ENCODE measurements at regions of chr11 and their contacts with region 1.

Region 1: GRCh38 chr11:61718621-61719302 is 33.7 kb upstream of the MYRF start:
- DNase-seq: no peak
- H3K4me3 ChIP-seq: no peak overlapping the region
- H3K27ac ChIP-seq: no peak overlapping the region
- H3K4me1 ChIP-seq: no peaks in the 10 kb centered on the region
- H3K27me3 ChIP-seq: no peaks in the 10 kb centered on the region
- CTCF ChIP-seq: no peak

Region 2: DNA sequence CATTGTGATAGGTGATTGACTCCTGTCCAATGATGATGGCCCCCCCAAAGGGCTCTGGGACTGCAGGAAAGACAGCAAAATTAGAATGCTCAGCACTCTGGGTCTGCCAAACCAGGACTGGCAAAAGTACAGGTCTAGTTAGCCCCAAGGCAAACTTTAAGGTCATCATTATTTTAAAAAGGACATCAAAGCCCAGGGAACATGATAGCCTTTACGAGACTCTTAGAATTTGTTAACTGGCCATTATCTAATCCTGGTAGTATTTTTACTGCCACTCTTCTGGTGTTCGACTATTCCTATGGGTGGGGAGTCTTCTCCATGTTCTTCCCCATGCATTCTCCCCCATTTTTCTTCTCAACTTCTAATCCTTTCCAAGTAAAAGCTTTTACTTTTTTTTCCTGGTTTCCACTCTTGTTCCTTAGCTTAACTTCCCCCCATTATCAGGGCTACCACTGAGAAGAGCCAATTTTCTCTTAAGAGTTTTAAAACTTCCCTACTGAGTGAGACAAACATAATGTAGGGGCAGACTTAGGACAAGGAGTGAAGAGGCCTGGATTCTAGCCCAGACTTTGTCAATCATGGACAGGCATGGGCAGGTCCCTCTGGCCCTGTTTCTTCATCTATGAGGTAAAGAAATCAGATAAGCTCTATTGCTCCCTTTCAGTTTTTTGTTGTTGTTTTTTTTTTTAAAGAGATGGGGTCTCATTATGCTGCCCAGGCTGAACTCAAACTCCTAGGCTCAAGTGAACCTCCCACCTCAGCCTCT is 392.9 kb before region 1 on chr11:
- CTCF ChIA-PET with region 1: no interaction called
- POLR2A ChIA-PET with region 1: no interaction called
- intact Hi-C with region 1: no loop called
- DNase-seq: no peak
- H3K4me3 ChIP-seq: no peak overlapping the region
- H3K27ac ChIP-seq: no peak overlapping the region
- H3K4me1 ChIP-seq: 0 out of 2 replicates have a peak, but pooled peaks cover 6% of the 10 kb centered on the region
- H3K27me3 ChIP-seq: no peaks in the 10 kb centered on the region
- CTCF ChIP-seq: no peak

Region 3: DNA sequence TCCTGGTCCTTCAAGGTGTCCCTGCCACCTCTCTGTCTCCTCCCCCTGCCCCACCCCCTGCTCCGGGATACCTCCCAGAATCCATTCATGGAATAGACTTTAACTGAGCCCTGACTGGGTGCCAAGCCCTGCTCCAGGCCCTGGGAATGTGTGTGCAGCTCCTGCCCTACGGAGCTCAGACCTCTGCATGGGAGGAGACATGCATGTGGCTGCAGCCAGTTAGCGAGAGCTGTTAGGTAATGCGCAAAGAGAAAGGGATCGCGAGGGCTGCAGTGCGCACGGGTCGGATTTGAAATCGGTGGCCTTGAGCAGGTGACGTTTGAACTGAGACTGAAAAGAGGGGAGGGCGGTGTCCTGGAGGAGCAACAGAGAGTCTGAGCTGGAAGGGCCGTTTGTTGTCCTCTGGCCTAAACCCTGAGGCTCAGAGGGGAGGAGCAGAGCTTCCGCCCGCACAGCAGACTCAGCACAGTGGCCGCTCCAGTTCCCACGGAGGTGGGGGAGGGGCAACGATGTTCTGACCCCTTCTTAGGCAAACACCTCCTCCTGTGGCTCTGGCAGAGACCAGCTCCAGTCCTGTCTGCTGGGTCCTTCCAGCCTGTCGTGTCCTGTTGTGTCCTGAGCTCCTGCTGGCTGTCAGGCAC is 230.0 kb before region 1 on chr11:
- CTCF ChIA-PET with region 1: interaction called, 19 read pairs
- POLR2A ChIA-PET with region 1: no interaction called
- intact Hi-C with region 1: no loop called
- DNase-seq: peak; percentile 81 to 95
- H3K4me3 ChIP-seq: peak overlapping the region; percentile 42; the same call in 1 of the 2 replicates
- H3K27ac ChIP-seq: peak overlapping the region; percentile 88
- H3K4me1 ChIP-seq: peaks cover 53% of the 10 kb centered on the region
- H3K27me3 ChIP-seq: no peaks in the 10 kb centered on the region
- CTCF ChIP-seq: no peak

Region 4: GRCh38 chr11:61695917-61696316 is 22.8 kb before region 1 on chr11:
- CTCF ChIA-PET with region 1: no interaction called
- POLR2A ChIA-PET with region 1: interaction called, 17 read pairs
- intact Hi-C with region 1: no loop called
- DNase-seq: peak; percentile 91 to 94
- H3K4me3 ChIP-seq: peak overlapping the region; percentile 34; the same call in 1 of the 2 replicates
- H3K27ac ChIP-seq: peak overlapping the region; percentile 96
- H3K4me1 ChIP-seq: peaks cover 73% of the 10 kb centered on the region
- H3K27me3 ChIP-seq: no peaks in the 10 kb centered on the region
- CTCF ChIP-seq: no peak

Region 5: DNA sequence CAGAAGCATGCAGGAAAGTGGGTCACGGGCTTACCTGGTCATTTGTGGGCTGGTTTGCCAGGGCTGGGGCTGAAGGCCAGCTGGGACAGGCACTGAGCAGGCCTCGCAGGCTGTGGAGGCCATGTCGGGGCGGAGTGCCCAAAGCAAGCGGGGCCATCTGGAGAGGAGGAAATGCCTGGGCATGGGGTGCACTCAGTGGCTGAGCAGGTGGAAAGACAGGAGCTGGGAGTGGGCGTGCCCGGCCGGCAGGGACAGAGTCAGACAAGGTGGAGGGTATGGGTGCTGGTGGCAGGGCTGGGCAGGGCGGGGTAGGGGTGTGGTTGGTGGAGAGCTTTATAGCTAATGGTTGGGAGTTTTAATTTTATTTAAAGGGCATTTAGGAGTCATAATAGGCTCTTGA is 11.2 kb before region 1 on chr11:
- CTCF ChIA-PET with region 1: interaction called, 3 read pairs
- POLR2A ChIA-PET with region 1: interaction called, 14 read pairs
- intact Hi-C with region 1: no loop called
- DNase-seq: peak in 1 of 2 experiments; percentile 71
- H3K4me3 ChIP-seq: no peak overlapping the region
- H3K27ac ChIP-seq: no peak overlapping the region
- H3K4me1 ChIP-seq: peaks cover 11% of the 10 kb centered on the region
- H3K27me3 ChIP-seq: no peaks in the 10 kb centered on the region
- CTCF ChIP-seq: no peak